Activated CD4-positive, alpha-beta T cell treated with anti-CD3 and anti-CD28 coated beads, Interleukin-2, amount 10 ng/mL, durations not matched to agents 24 days and 14 days (primary cell): ENCODE measurements at regions of chr14 and their contacts with region 1.

Region 1: DNA sequence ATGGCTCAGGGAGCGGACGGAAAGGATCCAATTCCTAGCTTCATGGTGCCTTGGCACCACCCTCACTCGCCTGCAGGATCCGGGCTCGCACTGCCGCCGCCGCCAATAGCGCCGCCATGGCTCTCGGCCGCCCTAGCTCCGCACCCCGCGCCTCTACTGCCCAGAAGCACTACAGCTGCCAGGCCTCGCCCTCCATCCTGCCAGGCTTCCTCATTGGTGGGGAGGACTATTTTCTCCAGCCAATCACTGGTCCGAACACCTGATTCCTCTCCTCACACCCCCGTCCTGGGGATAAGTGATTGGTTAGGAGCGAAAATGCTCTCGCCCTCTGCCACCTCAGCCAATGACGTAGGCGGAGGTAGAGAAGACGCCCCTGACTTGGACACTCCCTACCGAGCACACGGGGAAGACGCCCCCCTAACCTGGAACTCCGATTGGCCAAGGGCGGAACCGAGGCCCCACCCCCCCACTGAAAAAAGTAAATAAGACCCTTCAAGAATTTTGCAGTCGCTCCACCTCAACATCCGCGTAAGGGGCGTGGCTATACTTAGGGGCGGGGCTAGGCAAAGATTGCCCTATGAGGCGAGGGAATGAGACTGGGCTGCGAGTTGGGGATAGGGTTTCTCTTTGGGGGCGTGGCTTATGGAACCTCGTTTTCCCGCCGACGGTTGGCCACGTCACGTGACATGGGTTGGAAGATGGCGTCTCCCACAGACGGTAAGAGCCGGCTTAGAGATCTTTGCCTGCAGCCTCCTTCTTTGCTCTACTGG is at the starts of genes ALDH6A1 and LIN52:
- DNase-seq: peak; percentile 100
- H3K4me3 Mint-ChIP-seq: peak within 1 kb of the TSS; percentile 99
- H3K27ac Mint-ChIP-seq: peak within 1 kb of the TSS; percentile 97
- H3K4me1 Mint-ChIP-seq: peaks cover 35% of the 10 kb centered on the region
- H3K27me3 Mint-ChIP-seq: no peaks in the 10 kb centered on the region
- total RNA-seq, gene ALDH6A1: 10.8 and 11.8 TPM in 2 replicates
- total RNA-seq, gene LIN52: 15.2 and 21.5 TPM in 2 replicates

Region 2: GRCh38 chr14:73949744-73950734 is 134.4 kb before region 1 on chr14 and contains the starts of genes COQ6 and FAM161B:
- intact Hi-C with region 1: loop called (anchors 1 kb)
- DNase-seq: peak; percentile 98
- H3K4me3 Mint-ChIP-seq: peak within 1 kb of the TSS; percentile 99
- H3K27ac Mint-ChIP-seq: peak within 1 kb of the TSS; percentile 92
- H3K4me1 Mint-ChIP-seq: peaks cover 9% of the 10 kb centered on the region
- H3K27me3 Mint-ChIP-seq: no peaks in the 10 kb centered on the region
- total RNA-seq, gene COQ6: 16.6 and 20.1 TPM in 2 replicates
- total RNA-seq, gene FAM161B: 0.57 and 0.75 TPM in 2 replicates